Activated B cell treated with CpG ODN at 0.5 μM for 24 hours (primary cell): ENCODE measurements at regions of chr11 and their contacts with region 1.

Region 1: DNA sequence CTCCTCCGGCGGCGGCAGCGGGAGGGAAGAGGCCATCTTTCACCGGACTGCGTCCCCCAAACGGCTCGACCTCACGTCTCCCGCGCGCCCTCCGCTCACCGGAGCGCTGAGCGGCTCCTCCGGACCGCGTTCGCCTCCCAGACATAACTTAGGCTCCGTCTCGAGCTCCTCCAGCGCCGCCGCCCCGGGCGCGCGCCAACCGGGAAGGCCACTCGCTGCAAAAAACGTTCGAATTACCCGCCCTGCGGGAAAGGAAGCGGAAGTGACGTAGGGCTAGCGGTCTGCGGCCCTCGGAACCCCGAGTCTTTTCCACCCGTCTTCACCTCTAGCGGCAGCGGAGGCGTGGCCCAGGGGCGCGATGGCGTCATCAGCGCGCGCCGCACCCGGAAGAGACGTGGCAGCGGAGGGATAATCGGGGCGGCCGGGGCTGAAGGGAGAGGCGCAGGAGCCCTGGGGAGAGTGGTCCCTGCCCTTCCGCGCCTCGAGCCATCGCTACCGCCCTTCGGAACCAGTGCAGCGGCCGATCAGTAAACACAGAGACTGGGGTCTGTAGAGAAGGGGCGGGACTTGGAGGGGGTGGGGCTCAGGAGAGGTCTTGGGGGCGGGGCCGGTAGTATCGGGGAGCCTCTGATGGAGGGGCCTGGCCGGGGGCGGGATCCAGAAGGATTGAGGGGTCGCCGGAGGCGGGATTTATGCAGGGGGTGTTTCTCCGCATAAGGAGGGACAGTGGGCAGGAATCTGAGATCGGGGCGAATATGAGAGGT is at the starts of genes CDCA5 and ZFPL1:
- DNase-seq: peak; percentile 97
- ATAC-seq: peak; percentile 92
- H3K4me3 Mint-ChIP-seq: peak within 1 kb of the TSS; percentile 93
- H3K27ac Mint-ChIP-seq: peak within 1 kb of the TSS; percentile 94
- H3K4me1 Mint-ChIP-seq: peaks cover 25% of the 10 kb centered on the region
- H3K27me3 Mint-ChIP-seq: no peaks in the 10 kb centered on the region
- CTCF ChIP-seq: no peak
- total RNA-seq, gene CDCA5: 2.6 and 3.4 TPM in 2 replicates
- total RNA-seq, gene ZFPL1: 35.7 and 36.6 TPM in 2 replicates

Region 2: DNA sequence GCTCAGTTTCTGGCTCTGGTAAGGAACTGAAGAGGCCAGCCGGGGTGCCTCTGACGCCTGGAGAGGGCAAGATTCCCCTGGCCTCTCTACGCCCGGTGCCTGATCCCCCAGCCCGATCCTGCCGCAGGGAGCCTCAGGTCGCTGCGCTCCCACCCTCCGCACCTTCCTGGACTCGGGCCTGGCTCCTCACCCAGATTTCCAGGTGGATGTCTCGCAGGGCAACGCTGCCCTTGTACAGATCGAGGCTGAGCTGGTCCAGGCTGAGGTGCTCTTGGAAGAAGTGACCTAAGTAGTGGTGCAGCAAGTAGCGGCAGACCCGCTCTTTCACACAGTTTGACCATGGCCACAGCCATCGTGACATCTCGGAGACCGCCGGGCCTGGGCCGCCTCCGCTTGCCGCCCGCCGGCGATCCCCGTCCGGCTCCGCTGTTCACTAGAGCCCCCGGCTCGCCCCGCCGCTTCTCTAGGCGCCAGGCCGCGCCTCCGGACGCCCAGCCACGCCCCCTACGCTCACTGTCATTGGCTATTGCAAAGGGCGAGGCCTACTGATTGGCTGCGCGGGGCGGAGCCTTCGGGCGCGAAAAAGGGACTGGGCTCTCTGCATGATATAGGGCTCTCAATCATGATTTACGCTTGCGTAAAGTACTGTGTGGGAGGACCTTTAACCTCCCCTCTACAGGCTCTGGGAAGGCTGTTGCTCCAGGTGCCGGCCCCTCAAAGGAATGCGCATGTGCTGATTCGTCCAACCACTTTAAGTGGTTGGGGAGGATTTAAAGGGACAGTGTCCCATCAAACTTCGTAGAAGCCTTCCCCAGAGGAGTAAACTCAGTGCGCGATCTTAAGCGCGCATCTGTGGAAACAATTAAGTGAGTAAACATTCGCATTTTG is 167.0 kb before region 1 on chr11 and contains the start of gene ATG2A:
- CTCF ChIA-PET with region 1: no interaction called
- POLR2A ChIA-PET with region 1: no interaction called
- intact Hi-C with region 1: loop called (anchors 2 kb)
- DNase-seq: peak; percentile 97
- ATAC-seq: peak; percentile 98
- H3K4me3 Mint-ChIP-seq: peak within 1 kb of the TSS; percentile 88
- H3K27ac Mint-ChIP-seq: peak within 1 kb of the TSS; percentile 85
- H3K4me1 Mint-ChIP-seq: peaks cover 38% of the 10 kb centered on the region
- H3K27me3 Mint-ChIP-seq: no peaks in the 10 kb centered on the region
- CTCF ChIP-seq: no peak
- total RNA-seq, gene ATG2A: 31.2 and 35.0 TPM in 2 replicates

Region 3: DNA sequence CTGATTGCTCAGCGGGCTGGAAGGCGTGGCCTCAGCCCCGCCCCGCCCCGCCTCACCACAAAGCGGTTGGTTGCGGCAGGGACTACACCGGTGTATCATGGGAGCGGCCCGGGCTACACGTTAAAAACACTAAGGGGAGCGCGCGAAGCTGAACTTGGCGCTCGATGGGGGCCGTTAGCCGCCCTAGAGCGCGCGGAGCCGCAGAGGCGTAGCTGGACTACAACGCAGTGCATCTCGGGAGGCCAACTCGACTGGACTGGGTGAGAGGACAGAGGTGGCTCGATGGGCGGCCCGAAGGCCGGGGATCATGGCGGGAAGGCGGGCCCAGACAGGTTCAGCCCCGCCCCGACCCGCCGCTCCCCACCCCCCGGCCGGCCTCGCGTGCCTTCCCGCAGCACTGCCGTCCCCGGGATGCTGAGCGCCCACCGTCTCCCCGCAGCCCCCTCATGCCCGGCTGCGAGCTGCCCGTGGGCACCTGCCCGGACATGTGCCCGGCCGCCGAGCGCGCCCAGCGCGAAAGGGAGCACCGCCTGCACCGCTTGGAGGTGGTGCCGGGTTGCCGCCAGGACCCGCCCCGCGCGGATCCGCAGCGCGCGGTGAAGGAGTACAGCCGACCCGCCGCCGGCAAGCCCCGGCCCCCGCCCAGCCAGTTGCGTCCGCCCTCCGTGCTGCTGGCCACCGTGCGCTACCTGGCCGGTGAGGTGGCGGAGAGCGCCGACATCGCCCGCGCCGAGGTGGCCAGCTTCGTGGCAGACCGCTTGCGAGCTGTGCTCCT is 43.0 kb before region 1 on chr11 and contains the start of gene SAC3D1:
- CTCF ChIA-PET with region 1: no interaction called
- POLR2A ChIA-PET with region 1: no interaction called
- intact Hi-C with region 1: loop called (anchors 1 kb)
- DNase-seq: peak; percentile 89
- ATAC-seq: peak; percentile 93
- H3K4me3 Mint-ChIP-seq: peak within 1 kb of the TSS; percentile 93
- H3K27ac Mint-ChIP-seq: peak within 1 kb of the TSS; percentile 95
- H3K4me1 Mint-ChIP-seq: peaks cover 11% of the 10 kb centered on the region
- H3K27me3 Mint-ChIP-seq: no peaks in the 10 kb centered on the region
- CTCF ChIP-seq: no peak
- total RNA-seq, gene SAC3D1: 3.8 and 5.4 TPM in 2 replicates

Region 4: DNA sequence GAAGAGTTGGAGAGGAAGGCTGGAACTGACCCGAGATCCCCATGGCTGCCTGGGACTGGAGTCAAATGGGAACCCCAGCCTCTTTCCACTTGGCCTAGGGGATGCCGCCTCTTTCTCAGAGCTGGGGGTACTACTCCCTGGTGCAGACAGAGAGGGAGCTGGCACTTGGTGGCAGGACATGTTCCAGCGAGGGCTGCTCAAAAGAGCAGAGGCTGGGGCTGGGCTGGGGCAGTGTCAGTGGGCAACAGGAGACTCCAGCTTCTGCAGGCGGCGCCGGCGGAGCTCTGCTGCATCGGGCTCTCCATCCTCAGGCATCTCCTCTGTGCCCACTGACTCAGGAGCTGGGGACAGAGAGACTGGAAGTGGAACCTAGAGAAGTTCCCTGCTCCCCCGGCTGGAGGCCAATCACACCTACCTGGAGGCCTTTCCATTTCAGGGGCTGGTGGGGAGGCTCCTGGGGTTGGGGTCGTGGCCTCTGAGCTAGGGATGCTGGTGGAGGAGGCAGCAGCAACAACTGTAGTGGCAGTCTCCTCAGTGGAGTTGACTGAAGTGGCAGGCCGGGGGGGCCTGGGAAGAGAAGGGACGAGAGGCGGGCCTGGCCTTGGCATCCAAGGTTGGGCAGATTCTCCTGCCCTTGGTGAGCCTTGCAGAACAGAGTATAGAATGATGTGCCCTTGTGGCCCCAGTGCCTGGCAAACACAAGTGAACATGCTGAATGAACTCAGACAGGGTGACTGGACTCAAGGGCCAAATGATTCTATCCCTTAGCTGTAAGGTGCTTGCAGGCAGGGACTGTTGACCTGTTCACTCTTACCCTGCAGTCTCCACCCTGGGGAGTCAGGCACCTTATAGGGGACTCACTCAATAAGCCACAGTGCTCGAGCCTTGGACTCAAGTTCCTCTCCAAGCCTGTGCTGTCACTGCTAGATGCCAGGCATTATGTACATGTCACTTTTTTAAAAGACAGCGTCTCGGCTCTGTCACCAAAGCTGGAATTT is 44.4 kb after region 1 on chr11:
- CTCF ChIA-PET with region 1: no interaction called
- POLR2A ChIA-PET with region 1: no interaction called
- intact Hi-C with region 1: no loop called
- DNase-seq: no peak
- ATAC-seq: no peak
- H3K4me3 Mint-ChIP-seq: no peak overlapping the region
- H3K27ac Mint-ChIP-seq: peak overlapping the region; percentile 12
- H3K4me1 Mint-ChIP-seq: peaks cover 54% of the 10 kb centered on the region
- H3K27me3 Mint-ChIP-seq: no peaks in the 10 kb centered on the region
- CTCF ChIP-seq: no peak